ENCODE measurements at regions of chr1 and their contacts with region 1.

Region 1: DNA sequence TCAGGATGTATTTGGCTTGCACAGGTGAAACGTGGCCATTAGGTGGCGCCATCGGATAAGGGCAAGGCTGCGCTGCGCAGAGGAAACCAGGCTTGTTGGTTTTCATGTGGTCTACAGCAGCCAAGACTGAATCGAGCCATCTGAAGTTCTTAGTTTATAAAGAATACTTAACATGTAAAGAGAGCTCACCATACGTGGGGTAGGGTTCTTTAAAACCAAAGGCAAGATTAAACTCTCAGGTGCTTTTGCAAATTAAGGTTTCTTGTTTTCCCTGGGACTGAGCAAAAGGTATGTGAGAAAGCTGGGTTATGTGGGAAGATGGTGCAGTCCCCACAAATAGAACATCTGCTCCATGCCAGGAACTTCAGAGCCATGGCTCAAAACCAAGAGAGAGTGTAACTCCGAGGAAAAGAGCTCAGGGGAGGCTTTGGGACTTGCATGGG is 9.3 kb downstream of the MASP2 start:
- DNase-seq: peak; percentile 87
- H3K4me3 ChIP-seq: no peak overlapping the region
- H3K27ac ChIP-seq: no peak overlapping the region
- H3K4me1 ChIP-seq: no peaks in the 10 kb centered on the region
- H3K27me3 ChIP-seq: no peaks in the 10 kb centered on the region
- CTCF ChIP-seq: peak; percentile 94
- POLR2A ChIP-seq: no peak

Region 2: DNA sequence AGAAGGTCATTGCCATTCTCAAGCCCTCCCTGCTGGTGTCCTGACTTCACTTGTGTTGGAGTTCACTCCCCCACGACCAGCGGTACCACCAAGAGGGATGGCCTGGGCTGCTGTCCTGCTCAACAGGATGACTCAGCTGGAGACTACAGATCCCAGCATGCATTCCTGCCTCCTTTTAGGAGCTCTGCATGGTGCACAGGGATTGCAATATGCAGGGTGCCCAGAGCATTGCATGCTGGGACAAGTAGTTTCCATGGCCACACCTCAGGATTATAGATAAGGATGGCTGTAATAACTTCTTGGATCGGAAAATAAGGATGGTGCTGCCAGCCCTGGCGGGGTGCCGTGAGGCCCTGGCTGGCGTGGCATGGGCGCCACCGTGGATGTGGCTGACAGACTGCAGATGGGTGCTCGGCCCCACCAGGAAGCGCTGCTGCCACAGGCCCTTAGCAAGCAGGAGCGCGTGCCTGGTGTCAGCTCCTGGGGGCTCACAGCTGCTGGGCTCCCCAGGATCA is 391.4 kb before region 1 on chr1:
- CTCF ChIA-PET with region 1: no interaction called
- POLR2A ChIA-PET with region 1: no interaction called
- dilution Hi-C with region 1: no loop called
- intact Hi-C with region 1: no loop called
- DNase-seq: peak; percentile 13
- H3K4me3 ChIP-seq: no peak overlapping the region
- H3K27ac ChIP-seq: no peak overlapping the region
- H3K4me1 ChIP-seq: peaks cover under 1% of the 10 kb centered on the region
- H3K27me3 ChIP-seq: no peaks in the 10 kb centered on the region
- CTCF ChIP-seq: no peak
- POLR2A ChIP-seq: no peak

Region 3: DNA sequence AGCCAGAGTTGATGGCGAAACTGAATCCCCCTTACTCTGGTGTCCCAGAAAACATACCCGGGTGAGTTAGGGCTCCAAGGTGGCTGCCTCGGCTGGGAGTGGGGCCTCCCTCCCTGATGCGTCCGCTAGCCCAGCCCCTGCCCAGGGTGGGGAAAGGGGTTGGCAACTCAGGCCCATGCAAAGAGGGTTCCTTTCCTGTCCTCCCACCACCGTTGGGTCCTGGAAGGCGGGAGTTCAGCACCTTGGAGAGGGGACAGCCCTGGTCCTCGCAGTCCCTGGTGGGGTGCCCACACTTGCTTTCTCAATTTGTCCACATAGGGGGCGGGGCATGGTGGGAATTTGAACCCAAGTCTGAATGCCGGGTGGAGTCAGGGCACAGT is 16.0 kb after region 1 on chr1:
- CTCF ChIA-PET with region 1: interaction called, 77 read pairs
- POLR2A ChIA-PET with region 1: no interaction called
- dilution Hi-C with region 1: no loop called
- intact Hi-C with region 1: no loop called
- DNase-seq: no peak
- H3K4me3 ChIP-seq: no peak overlapping the region
- H3K27ac ChIP-seq: no peak overlapping the region
- H3K4me1 ChIP-seq: peaks cover 4% of the 10 kb centered on the region
- H3K27me3 ChIP-seq: no peaks in the 10 kb centered on the region
- CTCF ChIP-seq: no peak
- POLR2A ChIP-seq: peak; percentile 8

Region 4: GRCh38 chr1:11078631-11079030 is 40.9 kb after region 1 on chr1:
- CTCF ChIA-PET with region 1: interaction called, 19 read pairs
- POLR2A ChIA-PET with region 1: no interaction called
- dilution Hi-C with region 1: no loop called
- intact Hi-C with region 1: no loop called
- DNase-seq: no peak
- H3K4me3 ChIP-seq: no peak overlapping the region
- H3K27ac ChIP-seq: no peak overlapping the region
- H3K4me1 ChIP-seq: no peaks in the 10 kb centered on the region
- H3K27me3 ChIP-seq: no peaks in the 10 kb centered on the region
- CTCF ChIP-seq: no peak
- POLR2A ChIP-seq: no peak

Region 5: DNA sequence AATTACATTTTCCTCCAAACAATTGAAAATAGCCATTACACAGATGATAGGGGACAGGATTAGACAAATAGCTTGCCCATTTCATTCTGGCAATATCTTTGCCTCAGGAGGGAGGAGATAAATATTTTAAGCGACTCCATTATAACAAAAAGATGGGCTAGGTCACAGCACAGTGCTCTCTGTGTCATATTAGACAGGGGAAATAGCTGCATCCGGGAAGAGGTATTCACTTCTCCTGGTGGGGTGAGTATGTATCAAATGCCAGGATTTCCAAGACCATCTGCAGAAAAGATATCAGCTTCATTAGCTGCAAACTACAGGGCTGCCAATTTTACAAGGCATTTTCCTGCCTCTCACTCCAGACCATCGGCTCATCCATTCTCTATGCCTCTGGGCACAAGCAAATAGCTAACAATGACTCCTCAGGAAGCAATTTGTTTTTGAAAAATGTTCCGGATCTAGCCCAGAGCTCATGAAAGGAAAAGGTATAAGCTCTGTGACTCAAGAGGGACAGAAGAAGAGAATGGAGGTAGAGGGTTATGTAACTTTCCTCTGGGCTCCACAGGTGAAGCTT is 109.5 kb after region 1 on chr1:
- CTCF ChIA-PET with region 1: interaction called, 17 read pairs
- POLR2A ChIA-PET with region 1: interaction called, 3 read pairs
- dilution Hi-C with region 1: no loop called
- intact Hi-C with region 1: no loop called
- DNase-seq: peak; percentile 67
- H3K4me3 ChIP-seq: no peak overlapping the region
- H3K27ac ChIP-seq: no peak overlapping the region
- H3K4me1 ChIP-seq: peaks cover 16% of the 10 kb centered on the region
- H3K27me3 ChIP-seq: no peaks in the 10 kb centered on the region
- CTCF ChIP-seq: no peak
- POLR2A ChIP-seq: no peak

Region 6: GRCh38 chr1:11237356-11237755 is 199.6 kb after region 1 on chr1:
- CTCF ChIA-PET with region 1: interaction called, 14 read pairs
- POLR2A ChIA-PET with region 1: interaction called, 3 read pairs
- dilution Hi-C with region 1: no loop called
- intact Hi-C with region 1: loop called (anchors 1 kb)
- DNase-seq: no peak
- H3K4me3 ChIP-seq: no peak overlapping the region
- H3K27ac ChIP-seq: peak overlapping the region; percentile 66
- H3K4me1 ChIP-seq: peaks cover 14% of the 10 kb centered on the region
- H3K27me3 ChIP-seq: no peaks in the 10 kb centered on the region
- CTCF ChIP-seq: no peak
- POLR2A ChIP-seq: no peak

Region 7: DNA sequence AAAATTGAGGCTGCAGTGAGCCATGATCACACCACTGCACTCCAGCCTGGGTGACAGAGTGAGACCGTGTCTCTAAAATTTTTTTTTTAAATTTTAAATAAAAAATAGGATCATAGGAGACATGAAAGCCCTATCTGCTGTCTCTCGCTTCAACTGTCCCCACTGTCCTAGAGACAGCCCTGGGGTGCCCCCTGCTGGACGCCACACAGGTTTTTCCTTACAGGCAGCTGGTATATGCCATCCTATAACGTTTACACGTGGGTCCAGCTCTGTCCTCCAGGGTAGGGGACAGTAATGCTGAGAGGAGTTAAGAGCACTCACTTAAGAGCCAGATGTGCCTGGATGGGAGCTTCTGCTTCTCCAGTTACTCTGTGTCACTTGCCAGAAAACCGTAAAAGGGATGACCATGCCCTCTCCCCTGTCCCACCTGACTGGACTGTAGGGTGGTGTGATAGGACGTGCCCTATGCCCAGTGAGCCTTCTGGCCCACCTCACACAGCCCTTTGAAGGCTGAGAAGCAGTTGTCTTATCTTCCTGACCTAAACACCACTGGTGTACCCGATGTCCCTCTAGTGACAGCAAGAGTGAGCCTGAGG is 608.0 kb after region 1 on chr1:
- CTCF ChIA-PET with region 1: interaction called, 373 read pairs
- POLR2A ChIA-PET with region 1: interaction called, 3 read pairs
- dilution Hi-C with region 1: no loop called
- intact Hi-C with region 1: loop called (anchors 1 kb)
- DNase-seq: peak; percentile 64
- H3K4me3 ChIP-seq: no peak overlapping the region
- H3K27ac ChIP-seq: no peak overlapping the region
- H3K4me1 ChIP-seq: no peaks in the 10 kb centered on the region
- H3K27me3 ChIP-seq: no peaks in the 10 kb centered on the region
- CTCF ChIP-seq: peak; percentile 72 to 84
- POLR2A ChIP-seq: no peak

Region 8: DNA sequence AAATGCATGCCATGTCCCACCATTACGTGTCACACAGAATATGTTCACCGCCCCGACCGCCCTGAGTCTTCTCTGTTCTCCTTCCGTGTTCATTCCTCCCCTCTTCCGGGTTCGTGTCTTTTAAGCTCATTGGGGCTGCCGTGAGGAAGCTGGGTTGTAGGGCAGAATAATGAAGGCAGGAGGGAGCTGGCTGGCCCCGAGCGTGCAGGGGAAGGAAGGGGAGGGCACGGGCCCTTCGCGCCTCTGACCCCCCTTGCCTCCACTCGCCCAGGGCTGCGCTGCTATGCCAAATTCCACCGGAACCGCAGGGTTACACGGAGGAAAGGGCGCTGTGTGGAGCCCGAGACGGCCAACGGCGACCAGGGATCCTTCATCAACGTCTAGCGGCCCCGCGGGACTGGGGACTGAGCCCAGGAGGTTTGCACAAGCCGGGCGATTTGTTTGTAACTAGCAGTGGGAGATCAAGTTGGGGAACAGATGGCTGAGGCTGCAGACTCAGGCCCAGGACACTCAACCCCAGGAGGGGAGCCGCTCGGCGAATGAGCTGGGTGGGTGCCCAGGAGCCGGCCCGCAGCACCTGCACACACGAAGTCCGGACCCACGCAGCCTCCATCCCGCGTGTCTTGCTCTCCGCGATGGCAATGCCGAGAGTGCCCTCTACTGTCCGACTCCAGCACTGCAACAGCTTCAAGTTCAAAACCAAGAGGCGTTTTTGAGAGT is 681.7 kb after region 1 on chr1:
- CTCF ChIA-PET with region 1: interaction called, 18 read pairs
- POLR2A ChIA-PET with region 1: no interaction called
- dilution Hi-C with region 1: no loop called
- intact Hi-C with region 1: no loop called
- DNase-seq: peak; percentile 76
- H3K4me3 ChIP-seq: peak overlapping the region in 2 of 3 experiments; percentile 4 to 34
- H3K27ac ChIP-seq: no peak overlapping the region
- H3K4me1 ChIP-seq: peaks cover 4% of the 10 kb centered on the region
- H3K27me3 ChIP-seq: peaks cover 0 to 4% of the 10 kb centered on the region in 2 experiments
- CTCF ChIP-seq: peak; percentile 88 to 91
- POLR2A ChIP-seq: no peak

Region 9: DNA sequence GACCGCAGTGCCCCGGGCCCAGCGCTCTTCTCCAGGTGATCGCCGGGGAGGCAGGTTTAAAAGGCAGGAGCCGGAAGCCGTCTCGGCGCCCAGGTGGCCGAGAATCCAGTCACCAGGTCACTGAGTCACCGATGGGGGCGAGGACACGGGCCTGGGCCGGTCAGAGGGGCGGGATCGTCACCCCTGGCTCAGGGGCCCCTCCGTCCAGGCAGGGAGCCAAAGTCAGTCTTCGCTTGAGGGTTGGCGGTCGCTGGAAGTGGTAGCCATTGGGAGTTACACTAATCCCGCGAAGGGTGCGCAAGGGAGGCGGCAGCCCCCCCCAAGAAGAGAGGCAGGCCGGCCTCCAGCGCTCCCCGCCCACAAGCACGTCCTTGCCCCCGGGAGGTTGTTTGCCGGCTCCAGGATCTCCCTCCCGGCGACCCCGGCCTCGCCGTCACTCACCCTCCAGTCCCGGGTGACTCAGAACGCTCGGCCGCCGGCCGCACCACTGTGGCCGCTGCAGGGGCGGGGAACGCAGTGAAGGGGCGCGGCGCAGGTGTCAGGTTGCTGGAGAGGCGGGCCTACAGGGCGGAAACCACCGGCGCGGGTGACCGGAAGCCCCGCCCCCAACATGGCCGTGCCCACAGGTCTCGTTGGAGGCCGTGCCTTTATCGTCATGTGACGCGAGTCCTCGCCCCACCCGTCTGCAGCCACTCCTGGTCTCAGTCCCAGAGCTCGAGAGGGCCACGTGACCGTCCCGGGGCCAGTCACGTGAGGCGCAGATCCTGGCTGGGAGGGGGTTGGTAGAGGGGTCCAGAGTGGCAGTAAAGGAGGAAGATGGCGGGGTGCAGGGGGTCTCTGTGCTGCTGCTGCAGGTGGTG is 767.9 kb after region 1 on chr1 and contains the starts of genes CLCN6 and MTHFR:
- CTCF ChIA-PET with region 1: no interaction called
- POLR2A ChIA-PET with region 1: no interaction called
- dilution Hi-C with region 1: no loop called
- intact Hi-C with region 1: no loop called
- DNase-seq: peak; percentile 100
- H3K4me3 ChIP-seq: peak within 1 kb of the TSS; percentile 75 to 97 (median 93)
- H3K27ac ChIP-seq: peak within 1 kb of the TSS; percentile 85
- H3K4me1 ChIP-seq: peaks cover 51% of the 10 kb centered on the region
- H3K27me3 ChIP-seq: no peaks in the 10 kb centered on the region
- CTCF ChIP-seq: no peak
- POLR2A ChIP-seq: peak; percentile 58
- total RNA-seq, gene CLCN6: 41.2 and 43.3 TPM in 2 replicates
- total RNA-seq, gene MTHFR: 25.3 and 26.5 TPM in 2 replicates